KBM-7 (cell line): ENCODE measurements at regions of chr19 and their contacts with region 1.

Region 1: DNA sequence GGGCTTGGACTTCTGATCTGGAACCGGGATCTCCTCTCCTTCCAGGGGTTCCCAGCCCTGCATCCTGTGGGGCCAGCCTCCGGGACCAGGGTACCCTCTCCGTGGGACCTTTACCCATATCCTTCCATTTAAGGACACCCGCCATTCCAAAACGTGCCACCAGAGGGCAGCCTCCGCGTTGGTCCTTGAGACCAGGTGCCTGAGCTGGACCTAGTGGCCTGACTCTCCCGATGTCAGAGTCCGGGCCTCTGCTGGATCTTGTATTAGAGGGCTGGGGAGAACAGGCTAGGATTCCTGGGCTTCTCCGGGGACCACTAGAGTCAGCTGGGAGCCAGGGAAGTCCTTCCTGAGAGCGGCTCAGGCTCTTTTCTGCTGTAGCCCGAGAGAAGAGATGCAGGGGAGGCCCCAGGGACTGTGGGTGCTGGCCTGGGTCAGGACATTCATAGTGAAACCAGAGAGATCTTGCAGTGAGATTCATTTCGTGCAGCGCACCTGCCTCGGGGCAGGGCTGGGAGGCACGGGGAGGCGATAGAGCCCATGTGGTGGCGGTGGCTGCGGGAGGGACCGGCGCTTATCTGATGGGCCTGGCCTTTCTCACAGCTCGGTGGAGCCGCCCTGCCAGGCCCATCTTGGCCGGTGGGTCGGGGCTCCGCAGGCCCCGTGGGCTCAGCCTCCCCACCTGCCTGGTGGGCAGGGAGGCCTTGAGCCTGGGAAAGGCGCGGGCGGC is 9.8 kb upstream of the SLC7A10 start:
- DNase-seq: peak; percentile 66

Region 2: DNA sequence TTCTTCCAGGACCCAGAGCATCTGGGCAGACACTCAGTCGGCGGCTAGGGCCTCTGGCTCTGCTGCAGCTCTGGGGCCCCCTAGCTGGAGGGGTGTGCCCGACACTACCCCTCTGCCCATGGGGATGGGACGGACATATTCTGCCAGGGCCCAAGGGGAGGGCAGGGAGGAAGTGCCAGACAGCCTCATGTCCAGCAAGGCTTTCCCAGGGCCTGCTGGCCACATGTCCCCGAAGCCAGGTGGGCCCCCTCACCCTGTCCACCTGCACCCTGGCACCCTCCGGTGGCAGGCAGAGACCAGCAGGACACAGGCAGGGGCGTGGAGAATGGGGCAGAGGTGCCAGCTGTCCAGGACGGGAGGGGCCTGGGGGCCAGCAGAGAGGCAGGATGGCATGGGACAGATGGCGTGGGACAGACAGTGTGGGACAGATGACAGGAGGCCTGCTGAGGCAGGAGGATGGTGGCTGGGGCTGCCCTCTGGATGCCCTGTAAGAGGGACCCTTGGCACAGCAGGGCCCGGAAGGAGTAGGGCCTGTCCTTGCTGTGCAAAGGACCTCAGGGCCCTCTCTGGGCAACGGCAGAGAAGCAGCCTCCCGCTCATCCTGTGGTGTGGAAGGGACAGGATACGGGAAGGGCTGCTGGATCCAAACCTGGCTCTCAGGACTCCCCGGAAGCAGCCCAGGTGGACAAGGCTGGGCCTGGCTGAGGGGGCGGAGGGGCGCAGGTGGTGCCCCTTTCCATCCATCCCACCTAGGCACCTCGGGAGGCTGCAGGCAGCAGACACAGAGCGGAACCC is 167.2 kb after region 1 on chr19:
- in situ Hi-C with region 1: loop called (anchors 5 kb)
- DNase-seq: peak; percentile 12

Region 3: DNA sequence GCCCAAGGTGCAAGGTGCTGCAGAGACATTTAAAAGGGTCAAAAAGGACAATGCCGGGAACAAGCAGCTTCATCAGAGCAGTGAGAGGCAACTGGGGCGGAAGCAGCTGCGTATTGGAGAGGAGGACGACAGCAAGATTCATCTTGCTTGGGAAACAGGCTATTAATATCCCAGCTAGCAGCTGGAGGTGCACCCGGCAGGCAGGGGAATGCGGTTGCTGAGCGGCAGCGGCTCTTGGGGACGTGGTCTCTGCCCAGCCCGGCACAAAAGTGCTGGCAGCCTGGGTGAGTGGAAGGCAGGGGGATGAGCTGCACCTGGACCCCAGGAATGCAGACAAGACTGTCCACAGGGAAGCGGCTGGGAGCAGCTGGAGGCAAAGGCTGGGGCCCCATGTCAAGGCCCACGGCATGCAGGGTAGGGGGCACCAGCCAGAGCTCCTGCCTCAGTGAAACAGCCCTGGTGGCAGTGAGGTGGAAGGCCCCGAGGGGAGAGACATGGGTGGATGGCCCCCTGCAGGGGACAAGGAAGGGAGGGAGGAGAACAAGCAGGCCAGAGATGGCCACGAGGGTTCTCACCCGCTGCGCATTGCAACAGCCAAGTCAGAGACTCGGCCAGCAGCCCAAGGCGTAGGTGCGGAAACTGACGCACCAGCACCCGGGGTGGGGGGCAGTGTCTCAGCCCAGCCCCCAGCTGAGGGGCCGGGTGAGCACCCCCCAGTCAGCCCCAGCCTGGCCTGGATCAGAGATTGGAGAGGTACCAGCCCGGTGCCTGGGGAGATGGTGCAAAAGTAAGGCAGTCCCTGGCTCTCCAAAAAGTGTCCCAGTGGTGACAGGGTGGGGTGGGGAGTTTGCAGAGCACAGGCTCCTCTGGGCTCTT is 251.7 kb after region 1 on chr19:
- in situ Hi-C with region 1: no loop called
- DNase-seq: no peak

Region 4: GRCh38 chr19:33557720-33558119 is 322.3 kb after region 1 on chr19:
- in situ Hi-C with region 1: no loop called
- DNase-seq: no peak